CD8-positive, alpha-beta T cell (primary cell): ENCODE measurements at regions of chr2 and their contacts with region 1.

Region 1: DNA sequence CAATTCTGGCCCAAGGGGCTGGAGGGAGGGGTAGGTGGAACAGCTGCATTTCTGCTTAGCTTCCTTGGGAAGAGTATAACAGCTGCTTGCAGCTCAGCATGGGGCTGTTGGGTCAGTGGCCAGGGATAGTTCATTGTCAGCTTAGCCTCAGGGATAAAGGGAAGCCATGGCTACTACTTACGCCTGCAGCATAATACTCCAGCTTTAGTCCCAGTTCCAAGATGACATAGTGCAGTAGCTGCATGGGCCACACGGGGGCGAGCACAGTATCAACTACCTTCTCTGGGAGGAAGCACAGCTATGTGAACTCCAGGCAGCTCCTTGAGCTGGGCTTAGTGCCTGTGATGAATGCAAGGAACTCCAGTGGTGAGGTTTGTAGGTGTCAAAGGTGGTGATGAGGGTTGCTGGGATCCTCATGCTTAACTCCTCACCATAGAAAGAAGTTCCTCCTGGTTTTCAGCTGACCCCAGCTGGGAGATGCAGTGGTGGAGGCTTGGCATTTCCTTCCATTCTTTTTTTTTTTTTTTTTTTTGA is 35.4 kb upstream of the RHOB start:
- DNase-seq: peak; percentile 37 to 73 (median 64)
- ATAC-seq: peak; percentile 99
- H3K4me3 ChIP-seq: no peak overlapping the region
- H3K4me3 Mint-ChIP-seq: no peak overlapping the region
- H3K27ac ChIP-seq: no peak overlapping the region
- H3K27ac Mint-ChIP-seq: no peak overlapping the region
- H3K4me1 ChIP-seq: no peaks in the 10 kb centered on the region
- H3K4me1 Mint-ChIP-seq: no peaks in the 10 kb centered on the region
- H3K27me3 ChIP-seq: no peaks in the 10 kb centered on the region
- H3K27me3 Mint-ChIP-seq: peaks cover 11% of the 10 kb centered on the region
- CTCF ChIP-seq: peak; percentile 60

Region 2: DNA sequence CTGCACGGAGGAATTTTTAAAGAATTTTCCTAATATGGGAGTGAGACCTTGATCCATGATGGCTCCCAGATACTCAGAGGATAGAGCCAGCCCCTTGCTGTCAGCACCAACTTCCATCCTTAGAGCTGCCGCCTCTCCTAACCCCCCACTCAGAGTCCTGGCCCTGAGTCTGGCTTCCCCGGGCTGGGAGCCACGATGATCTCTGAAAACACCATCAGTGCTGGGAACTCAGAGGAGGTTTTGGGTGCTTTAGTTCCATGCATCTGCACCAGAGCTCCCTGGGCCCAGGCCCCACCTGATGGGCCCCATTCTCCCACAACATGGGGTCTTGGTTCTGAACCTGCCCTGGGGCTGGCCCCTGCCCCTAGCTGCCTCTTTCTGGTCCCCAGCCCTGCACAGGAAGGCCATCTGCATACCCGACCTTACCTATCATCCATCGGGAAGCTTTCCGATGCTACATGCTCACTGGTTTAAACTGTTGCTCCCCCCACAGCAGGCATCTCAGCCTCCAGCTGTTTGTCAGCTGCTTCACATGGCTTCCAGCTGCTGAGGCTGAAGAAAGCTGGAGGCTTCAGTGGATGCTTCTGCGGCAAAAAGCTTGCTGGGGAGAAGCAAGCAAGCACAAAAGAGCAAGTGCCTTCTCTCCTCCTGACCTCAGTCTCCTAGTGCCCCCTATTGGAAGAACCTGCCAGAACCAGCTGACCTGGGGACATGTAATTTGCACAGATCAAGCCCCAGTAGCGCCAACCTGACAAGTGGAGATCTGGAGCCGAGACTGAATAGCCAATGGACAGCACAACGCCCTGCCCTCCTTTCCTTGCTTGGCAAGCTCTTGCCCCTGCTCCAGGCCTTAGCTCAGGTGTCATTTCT is 11.2 kb after region 1 on chr2:
- CTCF ChIA-PET with region 1: interaction called, 19 read pairs
- POLR2A ChIA-PET with region 1: interaction called, 3 read pairs
- intact Hi-C with region 1: no loop called
- DNase-seq: peak in 3 of 9 experiments; percentile 13 to 39 (median 29)
- ATAC-seq: no peak
- H3K4me3 ChIP-seq: no peak overlapping the region
- H3K4me3 Mint-ChIP-seq: no peak overlapping the region
- H3K27ac ChIP-seq: no peak overlapping the region
- H3K27ac Mint-ChIP-seq: no peak overlapping the region
- H3K4me1 ChIP-seq: peaks cover 20% of the 10 kb centered on the region
- H3K4me1 Mint-ChIP-seq: peaks cover 21% of the 10 kb centered on the region
- H3K27me3 ChIP-seq: no peaks in the 10 kb centered on the region
- H3K27me3 Mint-ChIP-seq: peaks cover 5% of the 10 kb centered on the region
- CTCF ChIP-seq: no peak